Right ventricle myocardium superior (tissue), 1 donor: ENCODE measurements at regions of chr4 and their contacts with region 1.

Region 1: GRCh38 chr4:52957220-52957686 is 95.1 kb downstream of the RASL11B start:
- DNase-seq: peak; percentile 44
- ATAC-seq: peak; percentile 85

Region 2: GRCh38 chr4:52873861-52874343 is 83.4 kb before region 1 on chr4:
- intact Hi-C with region 1: loop called (anchors 10 kb)
- DNase-seq: no peak
- ATAC-seq: peak; percentile 80

Region 3: DNA sequence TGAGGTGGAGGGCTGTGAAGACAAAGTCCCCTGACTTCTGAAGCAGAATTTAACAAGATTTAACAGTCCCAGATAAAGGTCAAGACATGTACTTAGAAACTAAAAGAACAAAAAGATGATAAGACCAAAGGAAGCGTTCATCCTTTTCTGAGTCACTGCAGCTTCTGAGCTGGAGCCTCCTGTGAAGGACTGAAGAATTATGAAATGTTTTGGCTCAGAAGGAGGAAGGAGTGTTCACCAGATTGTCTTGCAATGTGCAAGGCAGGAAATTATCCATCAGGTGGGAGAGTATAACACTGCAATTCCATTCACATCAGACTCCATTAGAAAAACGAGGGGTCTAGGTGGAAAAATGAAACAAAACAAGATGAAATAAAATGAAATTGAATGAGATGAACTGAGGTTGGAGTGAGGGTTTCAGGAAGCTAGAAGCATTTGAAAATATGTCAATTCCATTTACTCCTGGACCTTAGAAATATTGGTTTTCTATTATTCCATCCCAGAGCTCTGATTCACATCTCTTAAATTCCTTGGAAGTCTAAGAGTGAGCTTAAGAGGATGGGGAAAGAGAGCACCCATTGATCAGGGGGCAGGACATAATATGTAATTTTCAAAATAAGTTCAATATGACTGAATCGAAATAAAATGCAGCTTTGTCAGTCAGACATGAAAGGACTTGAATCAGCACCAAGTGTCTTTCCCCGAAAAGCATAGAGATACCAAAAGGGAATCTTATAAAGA is 820.2 kb after region 1 on chr4:
- intact Hi-C with region 1: no loop called
- DNase-seq: no peak
- ATAC-seq: peak; percentile 85